ENCODE measurements at regions of chr12 and their contacts with region 1.

Region 1: GRCh38 chr12:39443081-39443928 is at the start of gene KIF21A:
- DNase-seq: peak; percentile 86
- H3K4me3 Mint-ChIP-seq: peak within 1 kb of the TSS; percentile 90
- H3K27ac Mint-ChIP-seq: peak within 1 kb of the TSS; percentile 81
- H3K4me1 Mint-ChIP-seq: peaks cover 25% of the 10 kb centered on the region
- H3K27me3 Mint-ChIP-seq: peaks cover 13% of the 10 kb centered on the region
- total RNA-seq, gene KIF21A: 35.0 and 35.6 TPM in 2 replicates

Region 2: GRCh38 chr12:38316391-38317129 is 1126.7 kb before region 1 on chr12 and contains the start of gene ALG10B:
- intact Hi-C with region 1: loop called (anchors 5 kb)
- DNase-seq: peak; percentile 90
- H3K4me3 Mint-ChIP-seq: peak within 1 kb of the TSS; percentile 97
- H3K27ac Mint-ChIP-seq: peak within 1 kb of the TSS; percentile 94
- H3K4me1 Mint-ChIP-seq: peaks cover 14% of the 10 kb centered on the region
- H3K27me3 Mint-ChIP-seq: no peaks in the 10 kb centered on the region
- total RNA-seq, gene ALG10B: 13.5 and 14.6 TPM in 2 replicates

Region 3: DNA sequence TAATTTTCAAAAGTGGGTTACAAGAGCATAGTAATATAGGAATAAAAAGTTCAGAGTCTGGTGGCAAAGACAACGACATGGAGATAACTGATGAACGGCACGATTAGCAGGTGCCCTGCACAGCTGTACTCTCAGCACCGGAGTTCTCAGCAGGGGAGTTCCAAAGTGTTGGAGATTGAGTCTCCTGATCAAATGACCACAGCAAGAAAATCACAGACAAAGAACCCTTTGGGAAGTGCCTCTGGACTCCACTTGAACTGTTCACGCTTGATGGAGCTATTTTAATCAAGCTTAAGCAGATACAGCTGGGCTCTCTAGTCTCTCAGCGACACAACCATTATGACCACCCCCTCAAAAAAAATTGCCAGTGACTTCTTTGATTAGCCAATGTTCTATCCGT is 973.6 kb before region 1 on chr12:
- intact Hi-C with region 1: no loop called
- DNase-seq: no peak
- H3K4me3 Mint-ChIP-seq: no peak overlapping the region
- H3K27ac Mint-ChIP-seq: no peak overlapping the region
- H3K4me1 Mint-ChIP-seq: no peaks in the 10 kb centered on the region
- H3K27me3 Mint-ChIP-seq: no peaks in the 10 kb centered on the region

Region 4: GRCh38 chr12:39319187-39319586 is 124.1 kb before region 1 on chr12:
- intact Hi-C with region 1: loop called (anchors 2 kb)
- DNase-seq: no peak
- H3K4me3 Mint-ChIP-seq: no peak overlapping the region
- H3K27ac Mint-ChIP-seq: no peak overlapping the region
- H3K4me1 Mint-ChIP-seq: no peaks in the 10 kb centered on the region
- H3K27me3 Mint-ChIP-seq: no peaks in the 10 kb centered on the region

Region 5: DNA sequence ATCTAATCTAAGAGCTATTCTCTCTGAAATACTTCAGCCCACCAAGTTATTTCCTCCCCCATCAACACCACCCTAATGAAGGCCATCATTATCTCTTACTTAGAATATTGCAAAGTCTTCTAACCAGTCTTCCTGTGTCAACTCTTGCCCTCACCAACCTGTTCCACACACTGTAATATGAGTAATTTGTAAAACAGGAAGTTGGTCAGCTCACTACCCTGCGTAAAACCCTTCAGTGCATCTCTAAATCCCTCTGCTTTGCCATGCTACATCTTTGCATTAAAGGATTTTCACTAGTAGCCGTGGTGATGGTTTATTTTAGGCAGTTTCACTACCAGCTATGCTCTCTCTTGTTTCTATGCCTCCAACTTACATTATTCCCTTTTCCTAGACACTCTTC is 70.4 kb before region 1 on chr12:
- intact Hi-C with region 1: loop called (anchors 1 kb)
- DNase-seq: peak; percentile 10
- H3K4me3 Mint-ChIP-seq: no peak overlapping the region
- H3K27ac Mint-ChIP-seq: peak overlapping the region; percentile 79
- H3K4me1 Mint-ChIP-seq: peaks cover 35% of the 10 kb centered on the region
- H3K27me3 Mint-ChIP-seq: no peaks in the 10 kb centered on the region

Region 6: DNA sequence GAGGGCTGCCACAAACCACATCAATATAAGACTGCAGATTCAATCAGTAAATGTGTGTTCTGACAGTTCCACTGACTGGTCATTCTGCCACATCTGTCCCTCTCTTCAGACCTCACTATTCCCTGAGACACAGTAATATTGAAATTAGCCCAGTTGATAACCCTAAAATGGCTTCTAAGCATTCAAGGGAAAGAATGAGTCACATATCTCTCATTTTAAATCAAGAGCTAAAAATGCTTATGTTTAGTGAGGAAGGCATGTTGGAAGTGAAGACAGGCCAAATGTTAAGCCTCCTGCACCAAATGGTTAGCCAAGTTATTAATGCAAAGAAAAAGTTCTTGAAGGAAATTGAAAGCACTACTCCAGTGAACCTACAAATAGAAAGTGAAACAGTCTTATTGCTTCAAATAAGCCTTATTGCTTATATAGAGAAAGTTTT is 24.1 kb after region 1 on chr12:
- intact Hi-C with region 1: loop called (anchors 1 kb)
- DNase-seq: no peak
- H3K4me3 Mint-ChIP-seq: peak overlapping the region; percentile 58
- H3K27ac Mint-ChIP-seq: peak overlapping the region; percentile 63
- H3K4me1 Mint-ChIP-seq: peaks cover 18% of the 10 kb centered on the region
- H3K27me3 Mint-ChIP-seq: peaks cover 5% of the 10 kb centered on the region

Region 7: GRCh38 chr12:40107098-40107802 is 663.9 kb after region 1 on chr12:
- intact Hi-C with region 1: loop called (anchors 10 kb)
- DNase-seq: peak; percentile 73
- H3K4me3 Mint-ChIP-seq: peak overlapping the region; percentile 47
- H3K27ac Mint-ChIP-seq: no peak overlapping the region
- H3K4me1 Mint-ChIP-seq: peaks cover 25% of the 10 kb centered on the region
- H3K27me3 Mint-ChIP-seq: peaks cover 31% of the 10 kb centered on the region